ENCODE measurements at regions of chr9 and their contacts with region 1.

Region 1: DNA sequence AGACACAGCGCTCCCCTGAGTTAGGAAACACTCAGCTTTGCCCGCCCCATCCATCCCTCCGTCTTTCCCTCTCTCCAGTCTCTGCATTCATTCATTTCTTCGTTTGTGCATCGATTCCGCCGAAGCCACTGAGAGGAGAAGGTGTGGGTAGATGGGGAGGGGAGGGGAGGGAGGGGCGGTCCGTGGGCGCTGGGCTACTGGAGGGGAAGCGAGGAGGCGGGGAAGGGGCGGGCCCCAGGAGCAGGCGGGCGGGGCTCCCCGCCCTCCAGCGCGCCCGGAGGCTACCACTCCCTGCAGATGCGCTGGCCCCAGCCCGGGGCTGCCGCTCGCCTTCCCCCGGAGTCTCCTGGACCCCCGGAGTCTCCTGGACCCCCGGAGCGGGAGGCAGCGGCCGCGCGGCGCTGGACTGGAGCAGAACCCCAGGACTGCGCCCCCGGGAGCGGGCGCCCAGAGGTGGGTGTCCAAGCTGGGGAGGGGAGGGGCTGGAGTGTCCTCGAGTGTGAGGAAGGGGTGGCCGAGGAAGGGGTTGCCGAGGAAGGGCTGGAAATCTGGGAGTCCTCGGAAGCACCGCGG is 159.5 kb downstream of the C9orf152 start:
- DNase-seq: peak; percentile 43 to 88 (median 71)
- ATAC-seq: peak; percentile 97
- H3K4me3 ChIP-seq: peak overlapping the region; percentile 83
- H3K4me3 Mint-ChIP-seq: peak overlapping the region; percentile 87 to 99 (median 92)
- H3K27ac ChIP-seq: no peak overlapping the region
- H3K27ac Mint-ChIP-seq: peak overlapping the region in 8 of 9 donors; percentile 54 to 90 (median 70)
- H3K4me1 ChIP-seq: peaks cover 5 to 10% of the 10 kb centered on the region in 2 donors
- H3K4me1 Mint-ChIP-seq: peaks cover 23 to 55% (median 38%) of the 10 kb centered on the region in 7 donors
- H3K27me3 ChIP-seq: no peaks in the 10 kb centered on the region
- H3K27me3 Mint-ChIP-seq: peaks cover 0 to 16% (median 11%) of the 10 kb centered on the region in 5 donors

Region 2: DNA sequence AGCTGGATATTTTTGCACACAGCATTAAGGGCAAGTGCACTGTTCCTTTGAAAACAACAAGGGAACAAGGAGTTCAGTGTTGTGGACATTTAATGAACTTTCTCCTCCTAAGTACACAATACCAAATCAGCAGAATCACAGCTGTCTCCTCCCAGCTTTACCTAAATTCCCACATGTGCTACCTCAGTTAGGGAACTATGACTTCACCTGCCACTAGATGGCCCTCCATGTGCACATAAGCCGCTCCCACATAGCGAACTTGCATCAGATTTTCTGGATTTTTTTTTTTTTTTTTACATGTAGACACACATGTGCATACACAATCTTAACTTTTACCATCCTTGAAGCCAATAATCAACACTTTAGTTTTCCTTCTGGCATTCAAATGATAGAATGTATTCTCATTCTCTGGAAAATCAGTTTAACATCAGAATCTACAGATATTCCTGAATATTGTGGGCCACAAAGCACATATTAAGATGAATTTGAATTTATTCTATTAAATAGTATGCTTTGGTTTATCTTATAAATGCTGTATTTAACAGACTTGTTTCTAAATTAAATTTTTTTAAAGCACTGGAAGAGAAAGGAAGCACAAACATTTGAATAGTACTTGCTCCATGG is 144.9 kb before region 1 on chr9:
- CTCF ChIA-PET with region 1: interaction called, 8 read pairs
- POLR2A ChIA-PET with region 1: no interaction called
- intact Hi-C with region 1: loop called (anchors 2 kb)
- DNase-seq: peak; percentile 11 to 73 (median 53)
- ATAC-seq: peak; percentile 84
- H3K4me3 ChIP-seq: no peak overlapping the region
- H3K4me3 Mint-ChIP-seq: no peak overlapping the region
- H3K27ac ChIP-seq: no peak overlapping the region
- H3K27ac Mint-ChIP-seq: no peak overlapping the region
- H3K4me1 ChIP-seq: no peaks in the 10 kb centered on the region
- H3K4me1 Mint-ChIP-seq: peaks cover 0 to 37% (median 5%) of the 10 kb centered on the region in 7 donors
- H3K27me3 ChIP-seq: no peaks in the 10 kb centered on the region
- H3K27me3 Mint-ChIP-seq: no peaks in the 10 kb centered on the region

Region 3: DNA sequence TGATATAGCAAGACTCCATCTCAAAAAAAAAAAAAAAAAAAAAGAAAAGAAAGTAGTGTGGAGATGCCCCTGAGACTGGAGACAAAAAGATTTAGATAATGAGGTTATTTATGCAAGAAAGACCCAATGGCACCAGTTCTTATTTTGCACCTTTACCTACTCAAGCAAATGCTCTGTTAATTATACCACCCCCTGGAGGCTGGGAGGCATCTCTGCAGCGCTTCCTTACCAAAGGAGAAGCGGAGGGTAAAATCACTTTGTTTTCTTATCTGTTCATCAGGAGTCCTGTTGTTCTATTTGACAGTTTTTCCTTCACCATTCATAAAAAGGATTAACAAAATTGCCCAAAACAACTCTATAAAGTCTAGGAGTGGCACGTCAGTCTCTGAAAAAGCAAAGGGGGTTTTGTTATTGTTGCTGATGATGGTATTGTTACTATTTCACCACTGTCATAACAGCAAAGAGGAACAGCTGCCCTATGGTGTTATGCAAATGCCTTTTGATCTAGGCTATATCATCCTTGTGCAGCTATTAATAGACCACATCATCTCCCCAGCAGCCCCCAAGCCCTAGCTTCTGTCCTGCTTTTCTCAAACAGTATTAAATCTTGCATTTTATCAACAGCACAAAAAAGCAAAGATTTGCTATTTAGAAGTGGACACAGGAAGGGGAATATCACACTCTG is 94.5 kb before region 1 on chr9:
- CTCF ChIA-PET with region 1: no interaction called
- POLR2A ChIA-PET with region 1: no interaction called
- intact Hi-C with region 1: loop called in 1 of 2 experiments (anchors 2 kb)
- DNase-seq: no peak
- ATAC-seq: no peak
- H3K4me3 ChIP-seq: no peak overlapping the region
- H3K4me3 Mint-ChIP-seq: no peak overlapping the region
- H3K27ac ChIP-seq: no peak overlapping the region
- H3K27ac Mint-ChIP-seq: no peak overlapping the region
- H3K4me1 ChIP-seq: no peaks in the 10 kb centered on the region
- H3K4me1 Mint-ChIP-seq: peaks cover 14 to 46% (median 28%) of the 10 kb centered on the region in 7 donors
- H3K27me3 ChIP-seq: no peaks in the 10 kb centered on the region
- H3K27me3 Mint-ChIP-seq: peaks cover 0 to 9% (median 5%) of the 10 kb centered on the region in 5 donors

Region 4: DNA sequence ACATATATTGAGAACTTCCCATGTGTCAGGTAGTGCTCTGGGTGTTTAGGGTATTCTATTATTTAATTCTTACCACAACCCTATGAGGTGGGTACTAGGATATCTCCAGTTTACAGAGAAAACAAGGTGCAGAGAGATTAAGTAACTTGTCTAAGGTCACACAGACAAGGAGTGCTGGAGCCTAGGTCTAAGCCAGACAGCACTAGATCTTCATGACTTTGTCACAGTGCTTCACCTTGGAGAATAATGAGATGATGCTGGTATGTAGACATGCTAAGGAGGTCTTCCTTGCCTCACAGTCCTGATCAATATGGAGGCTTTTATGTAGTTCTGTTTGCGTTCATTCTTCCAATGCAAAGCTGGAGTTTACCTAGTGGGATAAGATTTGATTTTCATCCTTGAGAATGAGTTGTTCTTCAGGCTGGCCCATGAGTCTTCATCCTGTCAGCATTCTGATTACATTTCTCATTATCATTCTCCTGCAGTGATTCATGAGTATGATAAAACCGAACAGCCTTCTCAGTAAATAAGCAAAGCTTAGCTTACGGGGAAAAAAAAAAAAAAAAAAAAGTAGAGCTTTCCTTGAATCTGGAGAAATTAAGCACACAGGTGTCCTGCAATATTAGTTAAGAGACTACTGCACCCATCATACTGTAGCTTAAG is 16.8 kb before region 1 on chr9:
- CTCF ChIA-PET with region 1: no interaction called
- POLR2A ChIA-PET with region 1: no interaction called
- intact Hi-C with region 1: loop called in 1 of 2 experiments (anchors 1 kb)
- DNase-seq: no peak
- ATAC-seq: no peak
- H3K4me3 ChIP-seq: no peak overlapping the region
- H3K4me3 Mint-ChIP-seq: no peak overlapping the region
- H3K27ac ChIP-seq: no peak overlapping the region
- H3K27ac Mint-ChIP-seq: peak overlapping the region in 2 of 9 donors; percentile 31 to 66
- H3K4me1 ChIP-seq: peaks cover 0 to 19% of the 10 kb centered on the region in 2 donors
- H3K4me1 Mint-ChIP-seq: peaks cover 15 to 31% (median 27%) of the 10 kb centered on the region in 7 donors
- H3K27me3 ChIP-seq: no peaks in the 10 kb centered on the region
- H3K27me3 Mint-ChIP-seq: peaks cover 0 to 4% (median 0%) of the 10 kb centered on the region in 5 donors

Region 5: DNA sequence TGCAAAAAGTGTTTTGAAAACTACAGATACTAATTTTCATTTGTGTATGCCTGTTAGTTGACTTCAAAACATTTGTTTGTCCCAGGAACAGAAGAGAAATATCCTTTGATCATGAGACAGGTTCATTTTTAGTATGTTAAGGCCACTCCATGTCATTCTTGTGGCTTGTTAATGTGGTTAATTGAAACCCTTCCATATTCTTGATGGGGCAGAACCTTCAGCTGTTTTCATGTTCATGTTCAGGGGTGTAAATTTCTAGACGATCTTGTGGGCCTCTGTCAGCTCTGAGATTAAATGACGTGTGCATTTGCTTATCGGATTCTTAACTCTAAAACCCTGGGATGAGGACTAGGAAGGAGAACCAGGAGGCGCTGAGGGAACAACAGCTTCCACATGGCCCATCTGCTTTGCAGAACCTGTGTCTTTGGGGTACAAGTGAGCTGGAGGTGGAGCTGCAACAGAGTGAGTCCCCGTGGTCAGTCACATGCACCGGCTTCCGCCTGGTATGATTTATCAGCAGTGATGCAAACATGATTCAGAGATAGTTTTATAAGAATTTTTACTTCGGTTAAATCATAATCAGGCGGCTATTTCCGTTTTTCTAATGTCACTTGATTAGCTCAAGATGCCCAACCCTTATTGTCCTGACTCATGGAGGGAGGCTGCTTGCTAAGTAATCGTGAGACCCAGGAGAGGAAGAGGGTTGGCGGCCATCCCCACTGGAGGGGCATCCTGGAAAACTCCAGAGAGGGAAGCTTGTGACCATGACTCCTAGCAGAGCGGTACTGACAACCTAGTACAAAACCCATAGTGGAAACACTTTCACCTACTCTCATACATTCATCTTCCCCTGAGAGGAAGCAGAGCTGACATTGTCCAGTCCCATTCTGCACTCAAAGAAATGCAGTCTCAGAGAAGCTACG is 21.1 kb after region 1 on chr9:
- CTCF ChIA-PET with region 1: no interaction called
- POLR2A ChIA-PET with region 1: no interaction called
- intact Hi-C with region 1: no loop called
- DNase-seq: no peak
- ATAC-seq: peak; percentile 80
- H3K4me3 ChIP-seq: no peak overlapping the region
- H3K4me3 Mint-ChIP-seq: peak overlapping the region in 1 of 10 donors; percentile 8
- H3K27ac ChIP-seq: no peak overlapping the region
- H3K27ac Mint-ChIP-seq: no peak overlapping the region
- H3K4me1 ChIP-seq: no peaks in the 10 kb centered on the region
- H3K4me1 Mint-ChIP-seq: peaks cover 0 to 68% (median 13%) of the 10 kb centered on the region in 7 donors
- H3K27me3 ChIP-seq: no peaks in the 10 kb centered on the region
- H3K27me3 Mint-ChIP-seq: peaks cover 0 to 5% (median 0%) of the 10 kb centered on the region in 5 donors

Region 6: DNA sequence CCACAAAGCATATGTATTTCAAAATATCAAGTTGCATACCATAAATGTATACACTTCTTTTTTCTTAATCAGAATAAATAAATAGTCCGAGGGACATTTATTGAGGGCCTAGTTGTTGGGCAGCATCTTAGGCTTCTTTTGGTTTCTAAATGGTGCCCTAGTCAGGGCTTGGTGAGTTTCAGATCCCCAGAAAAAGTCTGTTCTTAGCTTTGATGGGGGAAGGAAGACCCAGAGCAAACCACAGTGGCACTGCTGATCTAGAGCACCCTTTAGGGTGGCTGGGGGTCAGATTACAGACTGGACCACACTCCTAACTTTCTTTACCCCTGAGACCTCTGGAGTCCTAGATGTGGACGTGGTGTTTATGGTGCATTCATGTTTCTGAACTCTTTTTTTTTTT is 61.7 kb after region 1 on chr9:
- CTCF ChIA-PET with region 1: no interaction called
- POLR2A ChIA-PET with region 1: no interaction called
- intact Hi-C with region 1: no loop called
- DNase-seq: no peak
- ATAC-seq: no peak
- H3K4me3 ChIP-seq: no peak overlapping the region
- H3K4me3 Mint-ChIP-seq: no peak overlapping the region
- H3K27ac ChIP-seq: no peak overlapping the region
- H3K27ac Mint-ChIP-seq: no peak overlapping the region
- H3K4me1 ChIP-seq: no peaks in the 10 kb centered on the region
- H3K4me1 Mint-ChIP-seq: peaks cover 0 to 20% (median 0%) of the 10 kb centered on the region in 7 donors
- H3K27me3 ChIP-seq: no peaks in the 10 kb centered on the region
- H3K27me3 Mint-ChIP-seq: no peaks in the 10 kb centered on the region

Measured in naive thymus-derived CD4-positive, alpha-beta T cell (primary cell).